GM18951 (cell line): ENCODE measurements at regions of chr12 and their contacts with region 1.

Region 1: DNA sequence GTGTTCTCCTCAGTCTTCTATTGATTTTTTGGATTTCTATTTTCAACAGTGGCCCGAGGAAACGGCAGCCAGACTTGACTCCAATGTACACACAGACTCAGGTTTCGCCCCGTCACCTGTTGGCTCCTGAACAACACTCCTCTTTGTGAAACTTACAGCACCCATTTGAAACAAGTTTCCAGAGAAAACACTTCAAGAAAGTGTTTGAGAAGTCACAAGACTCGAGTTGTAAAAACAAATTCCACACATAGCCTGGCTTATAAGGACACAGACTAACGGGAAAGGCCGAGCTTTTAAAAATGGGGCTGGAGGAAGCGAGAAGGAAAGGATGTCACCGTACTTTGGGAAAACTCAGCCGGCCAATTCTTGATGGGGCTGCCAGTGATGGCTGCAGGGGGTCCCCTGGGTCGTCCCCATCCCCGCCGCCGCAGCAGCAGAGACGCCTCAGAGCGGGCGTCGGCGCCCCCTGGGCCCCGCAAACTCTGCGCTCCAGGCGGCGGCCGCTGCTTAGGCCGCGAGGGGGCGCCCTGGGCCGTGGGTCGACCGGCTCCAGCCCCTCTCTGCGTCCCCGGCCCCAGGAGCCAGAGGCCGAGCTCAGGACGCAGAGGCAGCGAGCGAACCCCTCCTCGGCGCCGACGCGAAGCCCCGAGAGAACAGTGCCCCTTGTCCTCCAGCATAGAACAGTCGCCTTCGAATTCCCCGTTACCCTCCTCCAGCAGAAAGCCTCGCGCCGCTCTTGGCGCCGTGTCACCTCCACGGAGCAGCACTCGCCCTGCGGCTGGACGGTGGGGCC is 106.9 kb downstream of the PRICKLE1 start:
- POLR2A ChIP-seq: no peak

Region 2: DNA sequence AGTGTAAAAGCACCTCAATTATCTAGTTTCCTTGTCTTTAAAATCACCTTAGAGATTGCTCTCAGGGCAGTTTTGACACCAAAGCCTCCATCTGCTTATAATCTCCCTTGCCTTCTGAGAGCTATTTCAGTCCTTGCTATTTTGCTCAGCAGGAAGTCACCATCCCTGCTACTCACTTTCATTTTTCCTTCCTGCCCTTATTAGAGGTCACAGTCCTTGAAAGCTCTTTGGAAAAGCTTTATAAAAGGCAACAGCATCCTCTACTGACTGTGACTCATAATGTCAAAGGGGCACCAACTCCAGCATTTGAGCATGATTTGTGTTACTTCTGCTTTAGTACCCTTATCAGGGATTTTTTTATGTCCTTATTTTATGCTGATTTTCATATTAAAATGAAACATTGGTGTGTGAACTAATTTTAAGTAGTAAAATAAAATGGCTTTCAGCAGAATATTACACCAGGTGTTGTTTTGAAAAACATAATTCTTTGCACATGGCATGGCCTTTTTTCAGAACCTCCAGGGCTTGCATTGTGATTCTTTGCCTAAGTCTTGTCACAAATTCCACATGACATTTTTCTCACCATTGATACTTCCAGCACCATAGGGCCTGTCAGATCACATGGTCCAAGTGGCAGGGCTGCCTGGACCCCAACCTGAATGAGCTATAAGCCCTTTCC is 856.3 kb after region 1 on chr12:
- in situ Hi-C with region 1: loop called (anchors 25 kb)
- POLR2A ChIP-seq: no peak